ENCODE measurements at regions of chr7 and their contacts with region 1.

Region 1: DNA sequence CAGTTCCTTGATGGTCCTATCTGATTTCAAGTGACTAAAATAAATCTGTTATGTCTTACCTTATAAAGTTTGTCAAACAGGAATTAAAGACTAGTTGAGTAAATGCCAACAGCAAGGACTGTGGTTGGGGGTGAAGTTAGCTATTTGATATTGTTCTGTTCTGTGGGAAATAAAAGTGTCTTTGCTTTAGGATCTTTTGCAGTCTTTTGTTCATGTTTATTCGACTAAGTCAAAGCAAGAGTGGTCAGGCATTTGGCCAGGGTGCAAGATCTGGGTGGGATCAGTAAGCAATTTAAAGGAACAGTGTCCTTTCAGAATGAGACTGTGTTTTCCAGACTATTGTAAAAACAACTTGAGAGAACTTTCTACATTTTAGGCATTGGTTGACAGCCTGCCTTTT is at the start of gene COL28A1:
- DNase-seq: no peak
- ATAC-seq: no peak
- total RNA-seq, gene COL28A1: 3.6 to 8.9 TPM

Region 2: DNA sequence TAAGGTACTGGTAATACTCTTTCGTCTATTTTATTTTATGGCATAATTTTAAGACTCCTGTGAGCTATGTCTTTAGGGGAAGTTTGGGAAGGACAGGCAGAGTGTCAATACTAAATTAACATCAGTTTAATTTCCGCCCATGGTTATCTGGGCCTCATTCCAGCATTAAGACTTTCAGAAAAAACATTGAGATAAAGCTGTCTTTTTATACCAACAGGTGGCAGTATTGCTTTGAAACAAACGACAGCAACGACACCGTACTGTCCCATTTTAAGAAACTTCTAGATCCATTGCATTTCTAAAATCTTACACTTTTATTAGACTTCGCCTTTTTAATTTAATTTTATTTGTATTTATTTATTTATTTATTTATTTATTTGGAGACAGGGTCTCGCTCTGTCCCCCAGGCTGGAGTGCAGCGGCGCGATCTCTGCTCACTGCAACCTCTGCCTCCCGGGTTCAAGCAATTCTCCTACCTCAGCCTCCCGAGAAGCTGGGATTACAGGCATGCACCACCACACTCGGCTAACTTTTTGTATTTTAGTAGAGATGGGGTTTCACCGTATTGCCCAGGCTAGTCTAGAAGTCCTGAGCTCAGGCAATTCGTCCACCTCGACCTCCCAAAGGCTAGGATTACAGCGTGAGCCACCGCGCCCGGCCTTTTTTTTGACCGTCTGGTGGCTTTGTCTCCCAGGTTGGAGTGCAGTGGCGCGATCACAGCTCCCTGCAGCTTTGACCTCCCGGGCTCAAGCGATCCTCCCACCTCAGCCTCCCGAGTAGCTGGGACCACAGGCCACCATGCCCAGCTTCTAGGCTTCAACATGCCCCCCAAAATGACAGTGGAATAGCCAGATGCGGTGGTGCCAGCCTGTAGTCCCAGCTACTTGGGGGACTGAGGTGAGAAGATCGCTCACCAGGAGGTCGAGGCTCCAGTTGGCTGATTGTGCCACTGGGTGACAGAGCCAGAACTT is 432.1 kb before region 1 on chr7:
- intact Hi-C with region 1: loop called (anchors 5 to 10 kb)
- DNase-seq: no peak
- ATAC-seq: peak in 1 of 2 donors; percentile 46

Measured in left cardiac atrium (tissue), 4 donors.